ENCODE measurements at regions of chr2 and their contacts with region 1.

Region 1: DNA sequence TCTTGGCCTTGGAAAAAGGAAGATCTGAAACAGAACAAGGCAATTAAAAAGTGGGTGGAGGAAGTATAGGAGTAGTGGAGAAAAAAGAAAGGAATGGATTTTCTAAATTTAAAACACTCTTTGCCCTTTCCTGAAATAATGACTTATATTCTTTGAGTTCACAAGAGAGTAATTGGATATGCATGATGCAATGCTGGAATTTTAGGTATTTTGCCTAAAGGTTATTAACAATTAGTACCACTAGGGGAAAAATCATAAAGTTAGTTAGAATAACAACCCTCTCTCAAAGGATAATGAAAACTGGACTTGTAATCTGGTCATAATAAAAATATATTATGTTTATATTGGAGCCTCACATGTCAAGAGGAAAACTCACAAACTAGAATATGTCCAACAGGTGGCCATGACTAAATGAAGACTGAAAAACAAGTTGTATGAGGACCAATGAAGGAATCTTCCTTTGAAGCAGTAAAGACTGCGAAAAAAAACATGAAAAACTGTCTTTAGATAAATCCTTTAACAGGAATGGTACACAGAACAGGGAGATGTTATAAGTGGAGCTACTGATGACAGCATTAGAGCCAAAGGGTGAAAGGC is 281.8 kb downstream of the NCKAP5 start:
- DNase-seq: no peak
- H3K4me3 ChIP-seq: no peak overlapping the region
- H3K27ac ChIP-seq: peak overlapping the region; percentile 10 to 14
- H3K4me1 ChIP-seq: no peaks in the 10 kb centered on the region
- H3K27me3 ChIP-seq: no peaks in the 10 kb centered on the region
- CTCF ChIP-seq: peak in 1 of 3 donors; percentile 19
- POLR2A ChIP-seq: no peak

Region 2: GRCh38 chr2:132604561-132604960 is 681.9 kb before region 1 on chr2:
- intact Hi-C with region 1: loop called (anchors 5 kb)
- DNase-seq: no peak
- H3K4me3 ChIP-seq: no peak overlapping the region
- H3K27ac ChIP-seq: no peak overlapping the region
- H3K4me1 ChIP-seq: no peaks in the 10 kb centered on the region
- H3K27me3 ChIP-seq: no peaks in the 10 kb centered on the region
- CTCF ChIP-seq: no peak
- POLR2A ChIP-seq: no peak

Measured in breast epithelium (tissue), 4 donors.